Spleen (tissue), 13 donors: ENCODE measurements at regions of chr12 and their contacts with region 1.

Region 1: DNA sequence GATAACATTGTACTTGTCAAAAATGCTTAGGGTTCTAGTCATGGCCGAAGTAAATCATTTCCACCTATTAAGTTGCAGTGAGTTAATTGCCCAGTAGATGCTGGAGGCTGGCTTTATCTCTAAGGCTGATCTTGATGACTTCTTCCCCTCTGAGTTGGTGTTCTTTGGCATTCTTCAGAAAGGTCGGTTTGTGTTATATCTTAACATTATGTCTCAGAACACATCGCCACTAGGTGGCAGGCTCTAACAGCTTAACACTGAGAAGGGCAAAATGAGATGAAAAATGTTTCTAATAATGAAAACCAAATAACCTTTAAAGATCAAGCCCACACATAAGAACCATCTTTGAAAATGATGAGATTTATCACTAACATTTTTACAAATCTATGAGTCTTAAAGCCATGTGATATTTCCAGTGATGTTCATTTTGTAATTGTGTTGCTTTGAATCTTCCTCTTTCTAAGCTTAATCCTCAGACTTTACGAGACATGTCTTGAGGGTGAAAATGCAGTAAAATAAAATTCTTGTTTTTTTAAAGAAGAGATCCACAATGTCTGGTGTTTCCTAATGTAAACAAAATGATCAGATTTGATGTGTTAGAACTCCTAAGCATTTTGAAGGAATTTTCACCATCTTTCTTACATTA is 28.6 kb downstream of the SUDS3 start:
- DNase-seq: no peak
- H3K4me3 ChIP-seq: no peak overlapping the region
- H3K27ac ChIP-seq: no peak overlapping the region
- H3K4me1 ChIP-seq: no peaks in the 10 kb centered on the region
- H3K27me3 ChIP-seq: no peaks in the 10 kb centered on the region
- CTCF ChIP-seq: peak in 8 of 11 experiments; percentile 40 to 66 (median 55)
- POLR2A ChIP-seq: no peak

Region 2: GRCh38 chr12:118590406-118591150 is 185.6 kb after region 1 on chr12:
- intact Hi-C with region 1: no loop called
- DNase-seq: no peak
- H3K4me3 ChIP-seq: no peak overlapping the region
- H3K27ac ChIP-seq: no peak overlapping the region
- H3K4me1 ChIP-seq: no peaks in the 10 kb centered on the region
- H3K27me3 ChIP-seq: peaks cover 0 to 27% (median 0%) of the 10 kb centered on the region in 7 donors
- CTCF ChIP-seq: no peak
- POLR2A ChIP-seq: no peak

Region 3: GRCh38 chr12:119544765-119545625 is 1140.0 kb after region 1 on chr12:
- intact Hi-C with region 1: loop called (anchors 10 kb)
- DNase-seq: no peak
- H3K4me3 ChIP-seq: no peak overlapping the region
- H3K27ac ChIP-seq: no peak overlapping the region
- H3K4me1 ChIP-seq: no peaks in the 10 kb centered on the region
- H3K27me3 ChIP-seq: peaks cover 0 to 41% (median 0%) of the 10 kb centered on the region in 7 donors
- CTCF ChIP-seq: peak; percentile 63 to 90 (median 81)
- POLR2A ChIP-seq: no peak